ENCODE measurements at regions of chr17 and their contacts with region 1.

Region 1: DNA sequence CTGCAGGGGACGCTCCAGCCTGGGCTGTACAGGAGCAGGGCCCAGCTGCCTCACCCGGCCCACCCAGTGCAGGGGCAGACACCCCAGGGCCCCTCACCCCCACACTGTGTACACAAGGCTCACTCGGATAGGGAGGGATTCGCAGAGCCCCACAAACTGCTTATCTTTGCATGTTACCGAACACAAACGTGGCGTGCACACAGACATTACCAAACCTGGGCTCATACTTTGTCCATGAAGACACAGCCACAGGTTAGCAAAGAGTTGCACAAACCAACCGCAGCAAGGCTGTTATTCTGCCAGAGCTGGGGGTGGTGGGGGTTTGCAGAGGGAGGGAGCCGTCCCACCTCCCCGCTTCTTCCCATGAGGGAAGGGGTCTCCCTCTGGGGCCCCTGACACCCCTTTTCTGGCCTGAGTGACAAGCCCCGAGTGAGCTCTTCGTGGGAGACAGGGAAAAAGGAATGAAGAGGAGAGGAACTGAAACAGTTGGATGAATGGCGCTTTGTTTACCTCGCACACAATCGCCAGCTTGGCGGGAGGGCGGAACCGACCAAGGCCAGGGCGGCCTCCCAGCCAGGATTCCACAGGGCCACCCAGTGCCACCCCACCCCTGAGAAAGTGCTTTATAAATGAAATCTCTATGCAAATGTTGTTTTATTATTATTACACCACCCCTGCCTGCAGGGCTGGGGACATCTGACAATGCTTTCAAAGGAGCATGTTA is 434 bp upstream of the CPSF4L start:
- DNase-seq: peak; percentile 93
- ATAC-seq: peak; percentile 90
- H3K4me3 ChIP-seq: peak overlapping the region; percentile 54 to 75 (median 63)
- H3K27ac ChIP-seq: peak overlapping the region; percentile 98
- H3K4me1 ChIP-seq: peaks cover 74% of the 10 kb centered on the region
- H3K27me3 ChIP-seq: no peaks in the 10 kb centered on the region
- CTCF ChIP-seq: peak; percentile 78
- EP300 ChIP-seq: peak; percentile 62 to 73; a peak in 2 of 4 replicates
- POLR2A ChIP-seq: peak; percentile 62 to 87
- RAD21 ChIP-seq: peak; percentile 82

Region 2: DNA sequence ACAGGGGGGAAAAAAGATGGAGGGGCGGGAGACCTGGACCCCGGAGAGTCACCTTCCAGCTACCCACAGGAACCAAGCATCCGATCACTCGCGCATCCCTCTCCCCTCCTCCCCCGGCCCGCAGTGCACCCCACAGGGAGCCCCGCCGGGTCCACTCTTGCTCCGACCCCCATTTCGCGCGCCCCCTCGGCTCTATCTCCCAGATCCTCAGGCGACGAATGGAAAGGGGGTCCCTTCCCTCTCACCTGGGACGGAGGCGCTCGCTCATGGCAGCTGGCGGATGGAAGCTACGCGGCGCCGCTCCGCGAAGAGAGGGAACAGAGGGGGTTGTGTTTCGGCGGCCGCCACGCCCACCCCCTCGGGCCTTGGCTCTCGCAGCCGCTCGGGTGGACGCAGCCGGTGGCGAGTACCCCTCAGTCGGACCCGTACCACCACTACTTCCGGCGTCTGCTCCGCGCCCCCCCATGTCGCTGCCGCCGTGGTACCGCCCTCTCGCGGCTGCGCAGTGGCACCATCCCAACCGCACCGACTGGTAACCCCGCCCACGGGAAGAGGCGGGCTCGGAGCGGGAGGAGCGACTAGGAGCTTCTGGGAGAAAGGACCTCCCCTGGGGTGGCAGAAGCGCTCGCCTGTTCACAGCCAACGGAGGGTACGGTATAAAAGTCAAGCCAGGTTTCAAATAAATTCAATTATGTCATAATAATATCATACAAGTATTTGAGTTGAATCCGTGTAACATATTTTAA is 30.1 kb before region 1 on chr17:
- CTCF ChIA-PET with region 1: no interaction called
- POLR2A ChIA-PET with region 1: interaction called, 15 read pairs
- in situ Hi-C with region 1: no loop called
- intact Hi-C with region 1: no loop called
- DNase-seq: peak; percentile 94
- ATAC-seq: peak; percentile 91
- H3K4me3 ChIP-seq: peak overlapping the region; percentile 97 to 98 (median 97)
- H3K27ac ChIP-seq: peak overlapping the region; percentile 77
- H3K4me1 ChIP-seq: peaks cover 61% of the 10 kb centered on the region
- H3K27me3 ChIP-seq: peaks cover 0 to 4% of the 10 kb centered on the region in 2 experiments; a peak in 1 of 5 replicates
- CTCF ChIP-seq: peak; percentile 78
- EP300 ChIP-seq: no peak; a peak in 1 of 4 replicates
- POLR2A ChIP-seq: peak; percentile 60 to 87
- RAD21 ChIP-seq: peak; percentile 51; the same call in 1 of the 2 replicates

Region 3: GRCh38 chr17:73283841-73284282 is 21.7 kb after region 1 on chr17:
- CTCF ChIA-PET with region 1: no interaction called
- POLR2A ChIA-PET with region 1: interaction called, 45 read pairs
- in situ Hi-C with region 1: no loop called
- intact Hi-C with region 1: loop called (anchors 1 kb)
- DNase-seq: no peak
- ATAC-seq: no peak
- H3K4me3 ChIP-seq: no peak overlapping the region
- H3K27ac ChIP-seq: no peak overlapping the region
- H3K4me1 ChIP-seq: peaks cover 37% of the 10 kb centered on the region
- H3K27me3 ChIP-seq: no peaks in the 10 kb centered on the region
- CTCF ChIP-seq: no peak
- EP300 ChIP-seq: no peak
- POLR2A ChIP-seq: no peak
- RAD21 ChIP-seq: no peak

Region 4: DNA sequence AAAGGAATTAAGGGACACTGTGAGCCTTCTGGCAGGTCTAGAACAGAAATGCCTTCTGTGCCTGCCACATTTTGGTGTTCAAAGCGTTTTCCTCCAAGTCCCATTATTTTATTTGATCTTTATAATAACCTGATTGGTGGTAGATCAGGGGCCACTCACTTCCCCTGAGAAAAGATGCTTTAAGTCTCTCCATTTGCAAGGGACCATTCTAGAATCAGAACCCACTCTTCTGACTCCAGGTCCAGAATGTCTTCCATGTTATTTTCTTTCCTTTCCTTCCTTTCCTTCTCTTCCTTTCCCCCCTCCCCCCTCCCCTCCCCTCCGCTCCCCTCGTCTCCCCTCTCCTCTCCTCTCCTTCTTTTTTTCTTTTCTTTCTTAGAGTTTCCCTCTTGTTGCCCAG is 68.9 kb after region 1 on chr17:
- CTCF ChIA-PET with region 1: no interaction called
- POLR2A ChIA-PET with region 1: interaction called, 12 read pairs
- in situ Hi-C with region 1: no loop called
- intact Hi-C with region 1: no loop called
- DNase-seq: no peak
- ATAC-seq: no peak
- H3K4me3 ChIP-seq: no peak overlapping the region
- H3K27ac ChIP-seq: no peak overlapping the region
- H3K4me1 ChIP-seq: peaks cover 13% of the 10 kb centered on the region
- H3K27me3 ChIP-seq: peaks cover 5 to 30% of the 10 kb centered on the region in 2 experiments; a peak in 3 of 5 replicates
- CTCF ChIP-seq: no peak
- EP300 ChIP-seq: no peak
- POLR2A ChIP-seq: no peak
- RAD21 ChIP-seq: no peak

Region 5: GRCh38 chr17:73371285-73371684 is 109.2 kb after region 1 on chr17:
- CTCF ChIA-PET with region 1: interaction called, 159 read pairs
- POLR2A ChIA-PET with region 1: interaction called, 22 read pairs
- in situ Hi-C with region 1: loop called (anchors 5 kb)
- intact Hi-C with region 1: no loop called
- DNase-seq: no peak
- ATAC-seq: no peak
- H3K4me3 ChIP-seq: no peak overlapping the region
- H3K27ac ChIP-seq: no peak overlapping the region
- H3K4me1 ChIP-seq: peaks cover 14% of the 10 kb centered on the region
- H3K27me3 ChIP-seq: peaks cover 7 to 73% of the 10 kb centered on the region in 2 experiments; a peak in 4 of 5 replicates
- CTCF ChIP-seq: no peak
- EP300 ChIP-seq: no peak
- POLR2A ChIP-seq: no peak
- RAD21 ChIP-seq: no peak

Measured in HepG2 (cell line).